ENCODE measurements at regions of chr16 and their contacts with region 1.

Region 1: GRCh38 chr16:83689385-83689831 is 118.4 kb upstream of the HSBP1 start:
- DNase-seq: peak; percentile 94
- ATAC-seq: peak; percentile 88
- H3K4me3 ChIP-seq: no peak overlapping the region
- H3K27ac ChIP-seq: no peak overlapping the region
- H3K4me1 ChIP-seq: peaks cover 2% of the 10 kb centered on the region; the same call in 1 of the 2 replicates
- H3K27me3 ChIP-seq: peaks cover 27% of the 10 kb centered on the region
- CTCF ChIP-seq: no peak
- POLR2A ChIP-seq: no peak
- RAD21 ChIP-seq: no peak

Region 2: DNA sequence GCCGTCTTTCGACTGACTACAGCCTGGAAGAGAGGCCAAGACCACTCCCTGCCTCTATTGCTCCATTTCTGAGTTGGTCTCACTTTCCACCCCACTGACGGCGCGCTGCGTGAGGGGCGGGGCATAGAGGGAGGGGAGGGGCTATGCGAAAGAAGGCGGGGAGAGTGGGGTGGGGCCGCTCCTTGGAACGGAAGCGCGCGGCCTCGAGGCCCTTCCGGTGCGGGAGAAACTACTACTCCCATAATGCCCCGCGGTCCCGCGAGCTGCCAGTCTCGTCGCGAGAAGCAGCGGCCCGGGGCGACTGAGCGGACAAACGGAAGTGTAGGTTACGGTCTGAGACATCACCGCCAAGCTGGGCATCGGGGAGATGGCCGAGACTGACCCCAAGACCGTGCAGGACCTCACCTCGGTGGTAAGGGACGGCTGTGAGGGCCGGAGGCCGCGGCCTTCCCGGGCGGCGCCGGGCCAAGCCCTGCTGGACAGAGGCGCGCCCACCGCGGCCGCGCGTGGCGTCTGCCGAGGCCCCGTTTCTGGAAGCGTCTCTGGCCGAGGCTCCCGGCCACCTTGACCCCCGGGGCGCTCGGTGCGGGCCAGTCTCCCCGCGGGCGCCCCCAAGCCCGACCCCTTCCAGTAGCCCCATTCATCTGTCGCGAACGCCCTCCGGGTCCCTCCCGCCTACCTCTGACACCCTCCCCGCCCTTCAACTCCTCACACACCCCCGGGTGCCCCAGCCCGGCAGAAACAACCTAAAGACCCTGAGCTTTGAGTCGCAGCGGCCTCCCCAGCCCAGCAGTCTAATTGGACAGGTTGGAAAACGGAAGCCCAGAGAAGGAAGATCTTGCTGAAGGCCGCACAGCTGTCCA is 118.5 kb after region 1 on chr16 and contains the start of gene HSBP1:
- CTCF ChIA-PET with region 1: no interaction called
- POLR2A ChIA-PET with region 1: no interaction called
- dilution Hi-C with region 1: no loop called
- in situ Hi-C with region 1: no loop called
- intact Hi-C with region 1: loop called (anchors 5 kb)
- DNase-seq: peak; percentile 86
- ATAC-seq: peak; percentile 96
- H3K4me3 ChIP-seq: peak within 1 kb of the TSS; percentile 96
- H3K27ac ChIP-seq: peak within 1 kb of the TSS; percentile 86
- H3K4me1 ChIP-seq: peaks cover 6% of the 10 kb centered on the region
- H3K27me3 ChIP-seq: no peaks in the 10 kb centered on the region
- CTCF ChIP-seq: no peak
- POLR2A ChIP-seq: peak; percentile 46; the same call in 1 of the 2 replicates
- RAD21 ChIP-seq: no peak
- total RNA-seq, gene HSBP1: 8.8 and 20.6 TPM in 2 replicates